ENCODE measurements at regions of chr7 and their contacts with region 1.

Region 1: DNA sequence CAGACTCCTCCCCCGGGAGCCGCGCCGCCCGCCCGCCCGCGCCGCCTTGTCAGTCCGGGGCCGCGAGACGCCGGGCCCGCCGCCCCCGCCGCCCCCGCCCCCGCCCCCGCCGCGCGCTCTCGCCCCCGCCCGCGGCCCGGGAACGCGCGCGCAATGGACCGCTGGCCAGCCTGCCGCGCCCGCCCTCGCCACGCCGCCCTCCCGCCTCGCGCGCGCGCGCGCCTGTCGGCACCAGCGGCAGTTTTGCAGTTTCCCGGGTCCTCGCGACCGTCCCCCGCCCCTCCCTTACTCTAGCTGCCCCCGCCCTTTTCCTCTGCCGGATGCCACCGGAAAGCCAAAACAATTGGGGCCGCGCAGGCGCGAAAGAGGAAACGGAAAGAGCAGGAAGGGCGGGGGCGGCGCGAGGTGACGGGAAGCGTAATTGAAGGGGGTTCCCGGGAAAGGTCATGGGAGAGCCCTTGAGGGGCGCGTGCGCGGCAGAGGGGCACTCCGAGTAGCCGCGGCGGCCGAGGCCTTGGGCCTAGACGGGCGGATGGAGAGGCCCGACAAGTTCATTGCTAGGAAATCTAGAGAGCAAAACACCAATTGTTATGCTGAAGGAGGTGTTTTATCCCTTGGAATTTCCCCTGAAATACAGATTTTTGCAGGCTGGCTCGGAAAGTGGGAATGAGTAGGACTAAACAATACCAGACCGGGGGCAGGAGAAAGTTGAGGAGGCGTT is 400 bp upstream of the KBTBD2 start:
- DNase-seq: peak; percentile 99
- ATAC-seq: peak; percentile 69
- H3K4me3 Mint-ChIP-seq: peak overlapping the region; percentile 94
- H3K27ac Mint-ChIP-seq: peak overlapping the region; percentile 100
- H3K4me1 Mint-ChIP-seq: peaks cover 43% of the 10 kb centered on the region
- H3K27me3 Mint-ChIP-seq: no peaks in the 10 kb centered on the region
- CTCF ChIP-seq: no peak

Region 2: GRCh38 chr7:32905175-32905662 is 13.3 kb after region 1 on chr7:
- CTCF ChIA-PET with region 1: interaction called, 9 read pairs
- POLR2A ChIA-PET with region 1: interaction called, 25 read pairs
- intact Hi-C with region 1: loop called (anchors 1 kb)
- DNase-seq: peak; percentile 91
- ATAC-seq: peak; percentile 93
- H3K4me3 Mint-ChIP-seq: peak overlapping the region; percentile 72
- H3K27ac Mint-ChIP-seq: peak overlapping the region; percentile 91
- H3K4me1 Mint-ChIP-seq: peaks cover 14% of the 10 kb centered on the region
- H3K27me3 Mint-ChIP-seq: no peaks in the 10 kb centered on the region
- CTCF ChIP-seq: no peak

Measured in activated CD8-positive, alpha-beta T cell treated with anti-CD3 and anti-CD28 coated beads for 36 hours (primary cell).